Endothelial cell of umbilical vein (primary cell): ENCODE measurements at regions of chr11 and their contacts with region 1.

Region 1: DNA sequence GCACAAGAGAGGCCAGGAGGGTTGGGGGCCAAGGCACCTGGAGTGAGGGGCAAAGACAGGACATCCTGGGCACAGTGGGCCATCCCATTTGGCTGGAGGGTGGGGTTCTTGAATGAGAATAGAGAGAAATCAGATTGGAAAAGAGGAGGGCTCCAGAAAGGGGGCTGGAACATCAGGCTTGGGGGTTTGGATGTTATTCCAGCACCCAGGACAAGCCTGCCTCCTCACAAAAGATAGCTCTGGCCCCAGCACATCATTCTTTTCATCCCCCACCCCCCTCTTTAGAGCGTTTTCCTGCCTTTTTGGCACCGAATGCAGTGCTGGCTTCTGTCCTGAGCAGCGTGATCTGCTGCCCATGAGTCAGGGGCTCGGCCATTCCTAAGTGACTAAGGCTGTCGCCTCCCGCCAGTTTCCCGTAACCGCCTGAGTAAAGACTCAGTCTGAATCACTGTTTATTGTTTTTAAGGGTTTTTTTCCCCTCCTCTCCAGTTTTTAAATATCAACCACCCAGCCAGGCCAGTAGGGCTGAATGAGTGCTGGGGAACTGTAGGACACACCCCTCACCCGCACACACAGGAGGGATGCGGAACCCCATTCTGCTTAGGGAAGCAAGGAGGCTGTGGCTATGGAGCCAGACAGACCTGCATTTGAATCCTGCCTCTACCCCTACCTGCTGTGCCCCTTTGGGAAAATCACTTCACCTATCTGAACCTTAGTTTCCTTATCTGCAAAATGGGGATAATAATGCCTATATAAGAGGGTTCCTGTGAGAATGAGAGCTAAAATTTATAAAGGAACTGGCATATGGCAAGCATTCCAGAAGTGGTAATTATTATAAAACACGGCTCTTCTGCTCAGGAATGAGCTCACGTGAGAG is 32.4 kb upstream of the NAV2 start:
- DNase-seq: peak; percentile 98
- H3K4me3 ChIP-seq: no peak overlapping the region
- H3K27ac ChIP-seq: peak overlapping the region; percentile 99
- H3K4me1 ChIP-seq: peaks cover 49% of the 10 kb centered on the region
- H3K27me3 ChIP-seq: no peaks in the 10 kb centered on the region
- CTCF ChIP-seq: no peak
- POLR2A ChIP-seq: no peak

Region 2: DNA sequence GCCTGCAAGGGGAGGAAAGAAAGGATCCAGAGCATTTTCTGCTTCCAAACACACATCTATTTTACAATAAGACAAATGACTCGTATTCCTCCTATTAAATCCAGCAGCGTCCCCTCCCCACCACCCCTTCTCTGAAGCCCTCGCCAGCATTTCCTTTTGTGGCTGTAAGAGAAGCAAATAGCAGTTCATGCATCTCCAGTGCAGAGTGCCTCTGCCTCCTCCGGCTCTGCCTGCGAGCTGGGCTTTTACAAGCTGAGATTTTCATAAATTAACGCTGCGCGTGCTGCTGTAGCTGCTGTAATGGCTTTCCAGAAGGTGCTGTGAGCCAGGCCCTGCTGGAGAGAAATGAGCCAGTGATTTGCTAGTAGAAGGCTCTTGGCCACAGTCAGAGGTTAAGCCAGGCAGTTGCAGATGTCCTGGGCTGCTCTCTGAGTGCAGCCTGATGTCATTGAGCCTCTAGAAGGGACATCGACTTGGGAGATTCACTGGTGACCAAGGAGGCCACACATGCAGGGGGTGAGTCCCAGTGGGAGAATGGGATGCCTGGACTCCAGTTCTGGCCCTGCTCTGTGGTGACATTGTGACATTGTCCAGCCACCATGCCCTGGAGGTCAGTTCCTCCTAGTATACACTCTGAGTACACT is 102.1 kb before region 1 on chr11:
- CTCF ChIA-PET with region 1: no interaction called
- POLR2A ChIA-PET with region 1: no interaction called
- dilution Hi-C with region 1: no loop called
- intact Hi-C with region 1: loop called (anchors 1 kb)
- DNase-seq: peak; percentile 86
- H3K4me3 ChIP-seq: peak overlapping the region in 1 of 3 experiments; percentile 25
- H3K27ac ChIP-seq: peak overlapping the region; percentile 78
- H3K4me1 ChIP-seq: peaks cover 25% of the 10 kb centered on the region
- H3K27me3 ChIP-seq: no peaks in the 10 kb centered on the region
- CTCF ChIP-seq: no peak
- POLR2A ChIP-seq: no peak

Region 3: GRCh38 chr11:19705936-19706335 is 25.7 kb after region 1 on chr11:
- CTCF ChIA-PET with region 1: interaction called, 3 read pairs
- POLR2A ChIA-PET with region 1: no interaction called
- dilution Hi-C with region 1: no loop called
- intact Hi-C with region 1: loop called (anchors 1 kb)
- DNase-seq: peak; percentile 75
- H3K4me3 ChIP-seq: peak overlapping the region in 1 of 3 experiments; percentile 9
- H3K27ac ChIP-seq: no peak overlapping the region
- H3K4me1 ChIP-seq: peaks cover 16% of the 10 kb centered on the region
- H3K27me3 ChIP-seq: no peaks in the 10 kb centered on the region
- CTCF ChIP-seq: no peak
- POLR2A ChIP-seq: no peak